HepG2 (cell line): ENCODE measurements at regions of chr3 and their contacts with region 1.

Region 1: DNA sequence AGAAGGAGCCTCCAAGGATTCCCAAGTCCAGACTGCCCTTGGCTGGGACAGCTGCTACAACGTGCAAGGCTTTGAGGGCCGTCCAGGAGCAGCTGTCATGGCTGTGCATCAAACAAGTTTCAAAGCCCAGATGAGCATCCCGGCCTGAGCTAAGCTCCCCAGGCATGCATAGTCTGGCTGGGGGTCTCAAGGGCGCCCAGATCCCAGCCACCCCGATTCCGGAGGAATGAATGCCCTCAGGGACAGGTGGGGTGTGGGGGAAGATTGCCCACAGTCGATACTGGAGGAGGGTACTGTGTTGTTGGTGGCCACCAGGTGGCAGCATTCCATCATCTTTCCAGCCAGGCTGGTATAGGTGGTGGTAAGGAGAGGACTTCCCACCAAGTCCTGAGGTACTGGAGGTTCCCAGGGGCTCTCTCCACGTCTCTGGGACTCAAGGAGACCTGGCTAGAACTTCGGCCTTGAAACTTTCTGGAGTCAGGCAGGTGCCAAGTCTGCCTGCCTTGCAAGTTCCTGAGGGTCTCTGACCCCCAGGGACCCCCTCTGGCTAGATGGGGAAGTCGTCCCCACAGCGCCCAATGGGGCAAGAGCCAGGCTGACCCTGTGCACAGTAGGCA is 32.8 kb downstream of the RBM5 start:
- DNase-seq: peak; percentile 70
- ATAC-seq: peak; percentile 80
- H3K4me3 ChIP-seq: no peak overlapping the region
- H3K27ac ChIP-seq: no peak overlapping the region
- H3K4me1 ChIP-seq: peaks cover 16% of the 10 kb centered on the region
- H3K27me3 ChIP-seq: peaks cover 0 to 6% of the 10 kb centered on the region in 2 experiments; a peak in 2 of 5 replicates
- CTCF ChIP-seq: peak; percentile 95
- EP300 ChIP-seq: no peak
- POLR2A ChIP-seq: peak in 1 of 2 experiments; percentile 33; a peak in 1 of 4 replicates
- RAD21 ChIP-seq: peak; percentile 93

Region 2: DNA sequence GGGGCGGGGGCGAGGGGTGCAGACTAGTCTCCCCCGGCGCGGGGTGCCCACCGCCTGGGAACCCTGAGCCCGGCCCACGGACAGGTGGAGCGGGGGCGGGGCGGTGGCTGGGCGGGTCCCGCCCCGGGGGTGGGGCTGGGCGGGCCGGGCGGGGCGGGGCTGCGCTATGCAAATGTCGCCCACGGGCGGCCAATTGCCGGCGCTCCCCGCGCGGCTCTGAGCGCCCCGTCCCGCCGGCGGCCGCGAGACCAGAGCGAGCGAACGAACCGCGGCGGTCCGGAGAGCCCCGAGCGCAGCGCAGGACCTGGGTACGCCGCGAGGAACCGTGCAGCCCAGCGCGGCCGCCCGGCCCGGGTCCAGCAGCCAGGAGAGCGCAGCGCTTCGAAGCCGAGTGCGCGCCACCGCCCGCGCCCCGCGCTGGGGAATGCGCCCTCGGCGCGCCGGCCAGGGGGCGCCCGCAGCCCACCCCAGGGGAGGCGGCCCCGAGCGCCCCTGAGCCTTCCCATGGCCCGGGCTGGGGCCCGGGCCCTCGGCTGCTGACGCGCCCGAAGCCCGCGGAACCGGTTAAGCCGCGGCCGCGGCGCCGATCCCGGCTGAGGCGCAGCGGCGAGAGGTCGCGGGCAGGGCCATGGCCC is 33.4 kb after region 1 on chr3 and contains the start of gene SEMA3F:
- CTCF ChIA-PET with region 1: interaction called, 10 read pairs
- POLR2A ChIA-PET with region 1: interaction called, 12 read pairs
- in situ Hi-C with region 1: no loop called
- intact Hi-C with region 1: loop called (anchors 1 kb)
- DNase-seq: peak; percentile 32
- ATAC-seq: peak; percentile 76
- H3K4me3 ChIP-seq: peak within 1 kb of the TSS; percentile 67 to 84 (median 81)
- H3K27ac ChIP-seq: no peak within 1 kb of the TSS
- H3K4me1 ChIP-seq: peaks cover 75% of the 10 kb centered on the region
- H3K27me3 ChIP-seq: peaks cover 0 to 15% of the 10 kb centered on the region in 2 experiments; a peak in 2 of 5 replicates
- CTCF ChIP-seq: peak; percentile 53; the same call in 1 of the 2 replicates
- EP300 ChIP-seq: no peak
- POLR2A ChIP-seq: 0 out of 4 replicates have a peak, but pooled peaks of 1 of the 2 experiments have one; percentile 32
- RAD21 ChIP-seq: peak; percentile 97
- total RNA-seq, gene SEMA3F: 3.6 and 7.6 TPM in 2 replicates